SK-N-SH (cell line): ENCODE measurements at regions of chr5 and their contacts with region 1.

Region 1: GRCh38 chr5:172188033-172188892 is at the start of gene STK10:
- DNase-seq: peak; percentile 98
- H3K4me3 ChIP-seq: peak within 1 kb of the TSS; percentile 70 to 99
- H3K27ac ChIP-seq: peak within 1 kb of the TSS; percentile 67 to 80
- H3K4me1 ChIP-seq: peaks cover 0 to 5% of the 10 kb centered on the region in 2 experiments; a peak in 1 of 4 replicates
- H3K27me3 ChIP-seq: no peaks in the 10 kb centered on the region
- CTCF ChIP-seq: peak; percentile 80
- EP300 ChIP-seq: 0 out of 4 replicates have a peak, but pooled peaks of 1 of the 2 experiments have one; percentile 30
- RAD21 ChIP-seq: peak; percentile 88
- polyA plus RNA-seq, gene STK10: 10.1 and 11.0 TPM in 2 replicates

Region 2: GRCh38 chr5:172106511-172107356 is 81.5 kb before region 1 on chr5:
- CTCF ChIA-PET with region 1: interaction called, 60 read pairs
- POLR2A ChIA-PET with region 1: interaction called, 3 read pairs
- DNase-seq: peak; percentile 86
- H3K4me3 ChIP-seq: peak overlapping the region in 1 of 2 experiments; percentile 14; a peak in 3 of 4 replicates
- H3K27ac ChIP-seq: no peak overlapping the region
- H3K4me1 ChIP-seq: peaks cover 14 to 32% of the 10 kb centered on the region in 2 experiments
- H3K27me3 ChIP-seq: no peaks in the 10 kb centered on the region
- CTCF ChIP-seq: peak; percentile 85
- EP300 ChIP-seq: no peak
- RAD21 ChIP-seq: peak; percentile 85

Region 3: DNA sequence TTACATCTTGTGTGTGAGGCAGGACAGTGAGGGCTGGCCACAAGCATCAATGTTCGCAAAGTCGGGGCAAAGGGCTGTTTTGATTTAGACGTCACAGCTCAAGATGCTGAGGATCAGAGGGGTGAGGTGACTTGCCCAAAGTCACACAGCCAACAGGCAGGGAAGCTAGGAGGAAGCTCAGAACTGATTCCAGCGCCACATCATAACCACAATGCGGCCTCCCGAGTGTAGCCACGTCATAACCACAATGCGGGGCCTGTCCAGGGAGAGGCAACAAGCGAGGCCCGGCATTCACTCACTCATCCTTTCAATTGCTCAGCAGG is 14.5 kb before region 1 on chr5:
- CTCF ChIA-PET with region 1: interaction called, 17 read pairs
- POLR2A ChIA-PET with region 1: no interaction called
- DNase-seq: no peak
- H3K4me3 ChIP-seq: no peak overlapping the region
- H3K27ac ChIP-seq: no peak overlapping the region; a peak in 1 of 4 replicates
- H3K4me1 ChIP-seq: peaks cover 0 to 11% of the 10 kb centered on the region in 2 experiments; a peak in 1 of 4 replicates
- H3K27me3 ChIP-seq: no peaks in the 10 kb centered on the region
- CTCF ChIP-seq: no peak
- EP300 ChIP-seq: no peak
- RAD21 ChIP-seq: no peak

Region 4: GRCh38 chr5:172283020-172283861 is 95.0 kb after region 1 on chr5 and contains the start of gene UBTD2:
- CTCF ChIA-PET with region 1: interaction called, 39 read pairs
- POLR2A ChIA-PET with region 1: no interaction called
- DNase-seq: peak; percentile 94
- H3K4me3 ChIP-seq: peak within 1 kb of the TSS; percentile 77 to 94
- H3K27ac ChIP-seq: peak within 1 kb of the TSS; percentile 67 to 86
- H3K4me1 ChIP-seq: peaks cover 5 to 8% of the 10 kb centered on the region in 2 experiments; a peak in 3 of 4 replicates
- H3K27me3 ChIP-seq: no peaks in the 10 kb centered on the region
- CTCF ChIP-seq: peak; percentile 56
- EP300 ChIP-seq: no peak
- RAD21 ChIP-seq: peak; percentile 45
- polyA plus RNA-seq, gene UBTD2: 13.8 and 15.5 TPM in 2 replicates

Region 5: DNA sequence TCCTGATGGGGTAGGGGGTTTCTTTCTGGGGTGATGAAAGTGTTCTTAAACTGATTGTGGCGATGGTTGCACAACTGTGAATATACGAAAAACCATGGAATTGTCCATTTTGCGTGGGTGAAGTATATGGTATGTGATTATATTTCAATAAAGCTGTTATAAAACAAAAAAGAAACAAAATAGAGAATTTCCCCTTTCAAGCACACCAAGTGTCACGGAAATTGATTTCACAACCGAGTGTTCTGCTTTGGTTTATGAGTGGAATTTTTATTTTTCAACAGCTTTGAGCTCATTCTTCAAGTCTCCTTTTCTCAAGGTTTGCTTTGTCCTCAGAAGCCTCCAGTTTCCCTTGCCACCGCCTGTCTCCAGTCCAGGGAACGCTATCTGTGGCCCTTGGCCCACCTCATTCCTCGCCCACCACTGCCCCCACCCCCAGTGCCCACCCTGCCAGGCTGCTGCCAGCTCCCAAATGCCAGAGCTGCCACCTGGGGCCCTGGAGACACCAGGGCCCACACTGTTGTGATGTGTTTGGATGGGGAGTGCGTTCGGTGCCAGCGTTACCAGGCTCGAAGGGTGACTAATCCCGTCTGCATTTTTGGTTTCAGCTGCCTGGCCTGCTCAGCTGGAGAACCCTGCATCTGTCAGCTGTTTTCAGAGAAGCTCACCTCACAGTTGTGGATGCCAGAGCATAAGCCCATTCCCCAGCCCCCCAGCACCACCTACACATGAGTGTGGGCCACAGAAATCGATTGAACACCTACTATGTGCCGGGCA is 552.4 kb after region 1 on chr5:
- CTCF ChIA-PET with region 1: no interaction called
- POLR2A ChIA-PET with region 1: no interaction called
- DNase-seq: no peak
- H3K4me3 ChIP-seq: no peak overlapping the region
- H3K27ac ChIP-seq: peak overlapping the region in 1 of 2 experiments; percentile 90; a peak in 2 of 4 replicates
- H3K4me1 ChIP-seq: peaks cover 0 to 8% of the 10 kb centered on the region in 2 experiments; a peak in 3 of 4 replicates
- H3K27me3 ChIP-seq: no peaks in the 10 kb centered on the region
- CTCF ChIP-seq: no peak
- EP300 ChIP-seq: no peak
- RAD21 ChIP-seq: no peak

Region 6: GRCh38 chr5:173602423-173602822 is 1414.2 kb after region 1 on chr5:
- CTCF ChIA-PET with region 1: no interaction called
- POLR2A ChIA-PET with region 1: no interaction called
- DNase-seq: no peak
- H3K4me3 ChIP-seq: no peak overlapping the region
- H3K27ac ChIP-seq: no peak overlapping the region
- H3K4me1 ChIP-seq: no peaks in the 10 kb centered on the region
- H3K27me3 ChIP-seq: no peaks in the 10 kb centered on the region
- CTCF ChIP-seq: no peak
- EP300 ChIP-seq: no peak
- RAD21 ChIP-seq: no peak